ENCODE measurements at regions of chr1 and their contacts with region 1.

Region 1: DNA sequence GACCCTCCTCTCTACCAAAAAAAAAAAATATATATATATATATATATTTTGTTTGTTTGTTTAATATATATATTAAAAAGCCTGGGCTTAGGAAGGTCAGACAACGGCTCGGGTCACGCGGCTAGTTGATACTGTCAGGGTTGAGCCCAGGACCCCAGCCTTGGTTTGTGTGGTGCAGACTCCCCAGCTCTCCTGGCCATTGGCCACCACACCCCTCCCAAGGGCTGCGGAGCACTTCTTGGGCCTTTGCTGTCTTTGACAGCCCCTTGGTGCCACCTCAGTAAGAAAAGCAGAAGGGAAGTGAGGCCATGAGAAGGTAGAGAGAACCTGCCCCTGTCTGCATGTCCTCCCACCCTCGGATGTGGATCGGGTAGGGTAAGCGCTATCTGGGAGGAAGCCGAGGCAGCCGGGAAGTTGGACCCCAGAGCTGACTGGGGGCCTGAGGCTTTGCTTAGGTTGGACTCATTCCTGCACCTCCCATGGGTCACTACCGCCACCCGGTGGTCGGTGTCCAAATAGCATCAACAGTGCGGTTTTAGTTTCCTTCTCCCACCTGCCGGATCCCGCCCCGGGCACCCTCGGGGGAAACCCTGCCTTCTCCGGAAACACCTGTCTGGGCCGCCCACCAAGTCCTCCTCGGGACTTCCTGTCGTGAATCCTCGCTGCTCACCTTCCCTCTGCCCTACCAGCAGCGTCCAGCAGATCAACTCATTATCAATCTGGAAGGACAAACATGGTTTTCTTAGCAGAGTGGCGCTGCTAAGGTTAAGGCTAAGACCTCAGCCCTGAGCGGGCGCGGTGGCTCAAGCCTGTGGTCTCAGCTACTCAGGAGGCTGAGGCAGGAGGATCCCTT is 29.8 kb upstream of the GNPAT start:
- DNase-seq: peak; percentile 83

Region 2: DNA sequence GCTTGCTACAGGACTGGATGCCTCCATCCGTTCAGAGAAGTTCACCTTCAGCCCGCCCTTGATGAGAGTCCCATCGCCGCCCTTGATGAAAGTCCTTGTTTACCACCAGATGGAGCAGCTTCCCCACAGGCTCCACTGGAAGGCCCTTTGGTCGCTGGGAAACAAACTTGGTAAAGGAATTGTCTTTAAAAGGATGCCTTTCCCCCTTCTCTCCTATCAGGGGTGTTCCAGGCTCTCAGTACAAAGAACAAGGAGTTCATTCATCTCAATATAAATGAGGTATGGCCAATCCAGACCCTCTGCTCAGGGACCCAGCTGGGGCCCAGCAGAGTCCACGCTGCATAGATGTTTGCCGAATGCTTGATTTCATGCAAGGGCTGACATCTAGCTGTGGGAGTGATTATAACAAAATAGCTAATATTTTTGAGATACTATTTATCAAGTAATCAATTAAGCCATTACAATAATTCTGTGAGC is 413.3 kb before region 1 on chr1:
- intact Hi-C with region 1: loop called (anchors 2 kb)
- DNase-seq: no peak

Region 3: DNA sequence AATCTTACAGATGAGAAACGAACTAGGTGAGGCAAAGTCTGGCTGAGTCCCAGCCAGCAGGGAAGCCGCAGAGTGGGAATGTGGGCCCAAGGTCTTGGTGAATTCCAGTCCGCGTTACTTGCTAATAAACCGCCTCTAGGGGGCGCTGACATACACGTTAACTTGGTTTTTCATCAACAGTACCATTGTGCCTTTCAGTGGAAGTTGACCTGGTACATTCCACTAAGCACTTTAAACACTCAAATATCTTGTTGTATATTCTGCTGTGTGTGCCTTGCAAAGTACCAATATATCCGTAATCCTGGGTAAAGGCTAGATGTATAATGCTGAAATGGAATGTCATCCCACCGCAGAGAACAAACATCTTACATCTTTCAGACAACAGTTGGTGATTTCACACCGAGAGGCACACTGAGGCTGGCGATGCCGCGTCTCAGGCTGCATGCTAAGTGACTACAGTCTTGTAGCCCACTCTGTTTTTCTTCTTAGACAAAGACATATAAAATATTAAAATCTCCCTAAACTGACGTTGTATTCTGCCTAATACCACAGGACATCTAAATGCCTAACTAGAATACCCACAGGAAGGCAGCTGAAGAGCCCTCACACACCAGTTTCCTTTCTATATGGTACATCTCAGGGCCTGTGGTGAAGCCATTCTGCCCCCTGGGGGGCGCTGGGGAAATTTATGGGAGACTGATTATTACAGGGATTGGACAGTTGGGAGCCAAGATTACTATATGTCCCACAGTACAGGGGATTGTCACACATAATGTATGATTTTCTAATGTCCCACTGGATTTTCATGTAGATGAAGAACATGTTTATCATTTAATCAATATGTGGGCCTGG is 293.7 kb before region 1 on chr1:
- intact Hi-C with region 1: loop called (anchors 2 kb)
- DNase-seq: no peak

Region 4: DNA sequence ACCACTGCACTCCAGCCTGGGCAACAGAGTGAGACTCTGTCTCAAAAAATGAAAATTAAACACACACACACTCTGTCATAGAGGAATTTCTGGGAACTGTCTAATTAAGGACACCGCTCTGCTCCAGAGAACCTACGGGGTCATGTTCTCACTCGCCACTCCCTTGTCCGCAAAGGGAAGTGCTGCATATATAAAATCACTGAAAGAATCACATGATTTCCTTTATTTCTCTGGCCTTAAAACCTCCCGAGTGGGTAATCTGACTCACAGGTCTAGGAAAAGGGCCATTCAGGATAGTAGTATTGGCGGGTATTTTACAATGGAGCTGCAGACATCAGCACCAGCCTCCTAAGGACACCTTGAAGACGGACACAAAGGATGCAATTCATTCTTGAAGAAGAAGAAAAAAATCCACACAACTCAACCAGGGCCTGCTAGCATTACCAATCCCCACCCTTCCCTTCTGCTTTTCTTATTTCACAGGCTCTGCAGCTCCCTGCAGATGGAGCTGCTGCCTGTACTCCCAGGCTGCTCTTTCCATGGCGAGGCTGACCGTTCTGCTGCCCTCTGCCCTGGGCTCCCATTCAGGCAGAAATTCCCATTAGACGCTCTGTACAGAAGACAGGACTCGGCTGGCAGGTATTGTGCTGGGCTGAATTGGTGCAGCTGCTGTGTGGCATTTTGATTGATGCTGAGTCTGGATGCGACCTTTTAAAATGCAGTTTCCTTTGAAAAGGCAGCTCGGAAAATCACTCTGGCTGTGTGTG is 117.9 kb before region 1 on chr1:
- intact Hi-C with region 1: loop called (anchors 1 kb)
- DNase-seq: no peak

Measured in cardiac septum (tissue), 1 donor.